Prostate gland (tissue), 2 donors: ENCODE measurements at regions of chr2 and their contacts with region 1.

Region 1: DNA sequence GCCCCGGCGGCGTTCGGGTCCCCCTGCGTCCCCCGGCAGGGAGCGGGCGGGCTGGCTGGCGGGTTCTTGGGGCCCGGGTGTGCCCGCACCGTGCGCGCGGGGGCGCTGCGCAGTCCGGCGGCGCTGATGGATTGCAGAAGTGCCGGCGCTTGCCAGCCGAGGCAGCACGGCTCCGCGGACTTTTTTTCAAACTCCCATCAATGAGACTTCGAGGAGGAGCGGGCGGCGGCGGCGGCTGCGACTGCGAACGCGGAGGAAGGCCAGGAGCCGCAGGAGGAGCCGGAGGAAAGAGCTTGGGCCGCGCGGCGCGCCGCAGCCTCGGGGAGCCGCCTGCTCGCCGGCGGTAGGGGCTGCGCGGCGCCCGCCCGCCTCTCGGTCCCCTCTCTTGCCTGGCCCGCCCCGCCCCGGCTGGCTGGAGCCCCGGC is at the start of gene GLI2:
- DNase-seq: peak; percentile 77
- H3K4me3 ChIP-seq: peak within 1 kb of the TSS; percentile 37 to 48
- H3K27ac ChIP-seq: peak within 1 kb of the TSS; percentile 77 to 78
- H3K4me1 ChIP-seq: peaks cover 12% of the 10 kb centered on the region
- H3K27me3 ChIP-seq: no peaks in the 10 kb centered on the region
- CTCF ChIP-seq: peak; percentile 58 to 79 (median 64)
- POLR2A ChIP-seq: no peak
- total RNA-seq, gene GLI2: 3.8 to 16.4 TPM

Region 2: DNA sequence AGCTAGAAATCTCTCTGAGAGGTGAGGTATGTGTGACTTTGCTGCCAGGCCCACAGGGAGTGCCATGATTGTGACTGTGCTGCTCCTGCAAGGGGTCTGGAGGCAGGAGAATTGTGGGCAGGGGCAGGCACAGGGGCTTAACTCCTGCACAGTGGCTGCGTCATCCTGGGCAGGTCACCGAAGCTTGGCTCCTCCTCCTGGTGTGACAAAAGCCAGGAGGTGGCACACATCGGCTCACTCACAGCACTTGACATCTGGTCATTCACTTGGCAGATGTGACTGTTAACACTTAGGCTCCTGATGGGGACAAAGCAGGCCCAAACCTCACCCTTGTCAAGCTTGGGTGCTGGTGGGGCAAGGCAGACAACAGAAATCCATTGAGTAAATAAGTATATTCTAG is 36.5 kb before region 1 on chr2:
- intact Hi-C with region 1: loop called (anchors 5 kb)
- DNase-seq: no peak
- H3K4me3 ChIP-seq: no peak overlapping the region
- H3K27ac ChIP-seq: no peak overlapping the region
- H3K4me1 ChIP-seq: no peaks in the 10 kb centered on the region
- H3K27me3 ChIP-seq: peaks cover 3% of the 10 kb centered on the region
- CTCF ChIP-seq: no peak
- POLR2A ChIP-seq: no peak

Region 3: GRCh38 chr2:120771111-120771947 is 35.6 kb after region 1 on chr2:
- intact Hi-C with region 1: no loop called
- DNase-seq: no peak
- H3K4me3 ChIP-seq: no peak overlapping the region
- H3K27ac ChIP-seq: no peak overlapping the region
- H3K4me1 ChIP-seq: no peaks in the 10 kb centered on the region
- H3K27me3 ChIP-seq: no peaks in the 10 kb centered on the region
- CTCF ChIP-seq: no peak
- POLR2A ChIP-seq: no peak

Region 4: DNA sequence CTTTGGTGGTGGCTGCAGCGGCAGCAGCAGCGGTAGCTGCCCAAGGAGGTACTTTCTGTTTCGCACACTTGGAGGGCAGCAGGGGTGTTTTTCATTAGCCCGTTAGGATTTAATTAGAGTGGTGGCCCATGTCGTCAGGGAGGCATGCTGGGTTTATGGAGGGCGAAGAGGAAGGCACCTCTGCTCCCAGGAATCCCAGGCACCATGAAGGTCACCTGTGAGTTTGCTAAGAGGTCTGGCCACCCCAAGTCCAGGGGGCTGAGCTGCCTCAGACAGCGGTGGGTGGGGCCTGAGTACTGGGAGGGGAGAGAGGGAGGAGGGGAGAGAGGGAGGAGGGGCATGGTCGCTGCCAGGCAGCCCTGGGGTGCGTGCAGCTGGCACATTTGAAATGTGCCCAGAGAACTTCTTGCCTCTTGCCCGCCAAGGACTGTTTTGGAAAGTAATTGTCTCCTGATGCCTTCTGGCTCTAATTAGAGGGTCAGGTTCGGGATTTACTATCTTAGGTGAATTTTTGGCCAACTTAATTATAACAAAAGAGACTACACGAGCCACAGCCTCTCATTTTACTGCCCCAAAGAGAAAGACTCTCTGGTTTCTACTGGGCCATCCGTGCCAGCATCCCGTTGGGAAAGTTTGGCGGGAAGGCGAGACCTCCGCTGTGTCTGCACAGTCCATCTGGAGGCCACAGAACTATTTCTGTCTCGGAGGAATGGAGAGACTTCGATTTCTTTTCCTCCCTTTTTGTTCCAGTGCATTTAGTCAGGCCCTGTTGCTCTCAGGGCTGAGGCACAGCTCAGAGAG is 61.9 kb after region 1 on chr2:
- intact Hi-C with region 1: loop called (anchors 5 kb)
- DNase-seq: no peak
- H3K4me3 ChIP-seq: no peak overlapping the region
- H3K27ac ChIP-seq: no peak overlapping the region
- H3K4me1 ChIP-seq: no peaks in the 10 kb centered on the region
- H3K27me3 ChIP-seq: no peaks in the 10 kb centered on the region
- CTCF ChIP-seq: no peak
- POLR2A ChIP-seq: no peak

Region 5: DNA sequence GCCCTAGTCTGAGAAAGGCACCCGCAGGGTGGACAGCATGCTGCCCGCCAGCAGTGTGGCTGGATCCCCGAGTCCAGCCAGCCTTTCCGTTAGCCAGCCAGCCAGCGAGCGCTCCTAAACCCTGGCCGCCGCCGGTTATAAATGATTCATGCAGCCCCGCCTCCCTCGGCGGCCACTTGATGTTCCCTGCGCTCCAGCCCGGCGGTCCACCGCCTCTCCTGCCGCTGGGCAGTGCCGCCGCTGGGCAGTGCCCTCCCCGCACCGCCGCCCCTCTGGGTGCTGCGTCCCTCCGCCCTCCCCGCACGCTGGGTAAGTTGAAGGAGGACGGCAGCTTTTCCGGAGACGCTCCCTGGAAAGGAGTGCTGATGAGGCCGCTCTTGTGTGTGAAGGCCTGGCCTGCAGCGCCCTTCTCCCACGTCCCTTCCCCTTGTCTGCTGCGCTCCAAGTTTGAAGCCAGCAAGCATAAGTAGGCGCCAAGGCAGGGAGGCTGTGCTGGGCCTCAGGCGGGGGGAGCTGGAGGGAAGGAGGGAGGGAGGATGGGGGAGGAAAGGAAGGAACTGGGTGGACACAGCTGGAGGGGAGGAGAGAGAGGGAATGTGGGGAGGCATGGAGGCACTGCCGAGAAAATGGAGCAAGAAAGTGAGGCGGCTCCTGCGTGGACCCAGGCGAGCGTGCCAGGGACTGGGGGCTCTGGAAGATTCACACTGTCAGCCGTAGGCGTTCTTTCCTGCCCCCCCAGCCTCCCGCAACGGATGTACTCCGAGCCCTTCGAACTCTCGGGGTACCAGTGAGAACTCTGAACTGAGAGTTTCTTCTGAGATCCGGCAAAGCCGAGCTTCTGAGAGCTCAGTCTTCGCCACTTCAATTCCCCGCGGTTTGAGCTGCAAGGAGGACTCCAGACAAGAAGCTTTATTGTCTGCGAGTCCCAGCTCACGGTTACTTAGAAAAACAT is 131.8 kb after region 1 on chr2:
- intact Hi-C with region 1: loop called (anchors 10 kb)
- DNase-seq: peak; percentile 50
- H3K4me3 ChIP-seq: peak overlapping the region; percentile 20 to 28
- H3K27ac ChIP-seq: peak overlapping the region; percentile 60 to 62
- H3K4me1 ChIP-seq: no peaks in the 10 kb centered on the region
- H3K27me3 ChIP-seq: no peaks in the 10 kb centered on the region
- CTCF ChIP-seq: no peak
- POLR2A ChIP-seq: no peak

Region 6: DNA sequence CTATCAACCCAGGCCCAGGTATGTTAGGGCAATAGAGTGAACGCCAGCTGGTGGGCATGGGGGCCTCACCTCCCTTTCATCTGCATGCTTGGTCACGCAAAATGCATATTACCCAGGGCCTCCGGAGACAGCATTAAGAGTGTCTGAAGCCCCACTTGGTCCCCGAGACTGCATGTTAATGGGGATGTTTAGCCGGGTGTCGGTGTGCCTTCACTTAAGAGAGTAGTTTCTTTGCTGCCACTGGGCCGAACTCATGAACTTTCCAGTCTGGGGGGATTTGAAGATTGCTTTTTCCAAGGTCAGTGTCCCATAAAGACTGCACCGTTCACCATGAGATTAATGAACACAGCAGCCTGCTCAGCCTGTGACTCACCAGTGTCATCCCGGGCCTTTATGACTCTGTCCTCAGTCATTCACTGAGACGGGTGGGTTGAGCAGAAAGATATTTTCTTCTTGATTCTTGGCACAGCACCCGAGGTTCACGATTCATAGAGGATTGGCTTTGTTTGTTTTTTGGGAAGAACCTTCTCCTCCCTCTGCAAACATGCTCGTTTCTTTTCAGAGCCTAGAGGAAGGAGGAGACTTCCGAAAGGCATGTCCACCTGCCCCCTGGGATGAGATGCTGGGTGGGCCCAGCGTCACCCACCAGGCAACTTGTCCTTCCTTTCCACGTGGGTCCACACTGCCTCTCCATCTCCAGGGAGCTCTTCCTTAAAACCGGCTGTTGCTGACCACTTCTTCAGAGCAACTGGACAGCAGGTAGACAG is 199.0 kb after region 1 on chr2:
- intact Hi-C with region 1: loop called (anchors 5 kb)
- DNase-seq: peak; percentile 79
- H3K4me3 ChIP-seq: no peak overlapping the region
- H3K27ac ChIP-seq: peak overlapping the region; percentile 41 to 66
- H3K4me1 ChIP-seq: peaks cover 39% of the 10 kb centered on the region
- H3K27me3 ChIP-seq: no peaks in the 10 kb centered on the region
- CTCF ChIP-seq: no peak
- POLR2A ChIP-seq: no peak

Region 7: DNA sequence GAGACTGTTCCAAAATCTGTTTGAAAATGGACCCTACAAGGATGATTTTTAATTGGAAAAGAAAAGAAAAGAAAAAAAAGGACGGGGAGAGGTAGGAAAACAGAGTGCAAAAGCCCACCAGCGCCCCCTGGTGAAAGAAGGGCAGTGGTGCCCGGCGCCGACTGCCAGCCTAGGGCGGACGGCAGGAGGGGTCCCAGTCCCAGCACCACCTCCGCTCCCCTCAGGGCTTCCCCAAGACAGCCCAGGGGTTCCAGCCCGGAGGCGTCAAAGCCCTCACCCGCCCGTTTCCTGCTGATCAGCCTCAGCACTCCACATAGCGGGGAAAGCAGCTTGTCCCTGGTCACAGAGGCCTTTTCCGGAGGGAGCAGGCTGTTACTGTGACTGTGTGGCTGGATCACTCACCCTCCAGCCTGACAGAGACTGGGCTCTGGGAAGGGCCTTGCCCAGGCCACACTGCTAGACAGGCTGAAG is 335.3 kb after region 1 on chr2:
- intact Hi-C with region 1: loop called (anchors 2 kb)
- DNase-seq: peak; percentile 50
- H3K4me3 ChIP-seq: no peak overlapping the region
- H3K27ac ChIP-seq: no peak overlapping the region
- H3K4me1 ChIP-seq: no peaks in the 10 kb centered on the region
- H3K27me3 ChIP-seq: no peaks in the 10 kb centered on the region
- CTCF ChIP-seq: peak; percentile 88 to 98 (median 94)
- POLR2A ChIP-seq: no peak

Region 8: DNA sequence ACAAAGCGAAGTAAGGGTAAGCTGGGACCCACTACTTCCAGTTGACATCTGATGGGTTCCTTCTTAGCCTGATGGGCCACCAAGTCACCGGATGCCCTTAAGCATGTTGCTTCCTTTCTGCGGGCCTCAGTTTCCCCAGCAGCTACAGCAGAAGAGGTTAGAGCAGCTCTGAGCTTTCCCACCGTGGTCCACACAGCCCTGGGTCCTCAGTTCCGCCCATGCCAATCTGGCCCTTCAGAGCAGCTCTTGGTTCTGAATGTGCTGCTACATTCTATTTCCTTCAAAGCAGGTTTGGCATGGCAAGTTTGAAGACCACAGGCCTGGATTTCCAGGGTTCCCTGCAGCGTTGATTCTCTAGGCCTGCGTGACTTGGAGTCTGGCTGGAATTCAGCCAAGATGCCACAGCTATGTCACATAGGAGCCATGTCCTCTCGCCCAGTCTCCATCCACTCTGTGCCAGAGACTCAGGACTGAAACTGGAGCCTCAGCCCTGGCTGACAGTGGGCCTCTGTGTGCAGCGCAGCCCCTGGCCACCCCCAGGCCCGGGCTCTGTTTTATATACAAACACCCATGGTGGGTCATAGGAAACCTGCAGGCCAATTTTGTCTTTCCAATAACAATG is 469.7 kb after region 1 on chr2:
- intact Hi-C with region 1: no loop called
- DNase-seq: no peak
- H3K4me3 ChIP-seq: no peak overlapping the region
- H3K27ac ChIP-seq: no peak overlapping the region
- H3K4me1 ChIP-seq: no peaks in the 10 kb centered on the region
- H3K27me3 ChIP-seq: no peaks in the 10 kb centered on the region
- CTCF ChIP-seq: no peak
- POLR2A ChIP-seq: no peak